ENCODE measurements at regions of chr2 and their contacts with region 1.

Region 1: DNA sequence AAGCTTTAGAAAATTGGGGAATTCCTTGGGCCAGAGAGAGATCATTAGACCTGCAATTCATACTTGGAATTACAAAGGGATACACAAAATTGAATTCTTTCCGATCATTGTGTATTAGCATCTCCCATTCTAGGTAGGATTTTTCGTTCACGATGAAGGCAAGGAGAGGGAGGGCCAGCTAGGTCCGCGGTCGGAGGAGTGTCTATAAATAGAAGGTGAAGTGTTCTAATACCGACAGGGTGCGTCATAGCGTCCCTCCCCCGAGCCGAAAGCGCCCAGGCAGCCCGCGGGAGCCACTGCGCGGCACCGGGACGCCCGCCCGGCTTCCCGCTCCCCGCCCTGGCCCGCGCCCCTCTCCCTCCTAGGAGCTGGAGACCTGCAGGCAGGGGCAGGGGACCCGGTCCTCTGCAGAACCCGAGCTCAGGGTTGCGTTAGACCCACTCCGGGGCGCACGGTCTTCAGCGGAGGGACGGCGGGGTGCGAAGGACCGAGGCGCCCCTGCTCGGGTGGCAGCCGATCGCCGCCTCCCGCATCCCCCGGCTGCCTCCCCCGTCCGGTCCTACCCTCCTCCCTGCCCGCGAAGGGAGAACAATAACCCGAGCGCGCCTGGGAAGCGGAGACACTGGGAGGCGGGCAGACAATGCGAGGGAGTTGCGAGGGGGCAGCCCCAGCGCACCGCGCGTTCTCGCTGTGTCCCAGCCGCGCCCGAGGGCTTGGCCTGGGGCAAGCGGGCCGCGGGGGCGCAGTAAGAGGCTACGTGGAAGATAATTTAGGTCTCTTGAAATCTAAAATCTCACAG is 114.2 kb upstream of the SERTAD2 start:
- DNase-seq: peak; percentile 78
- H3K4me3 ChIP-seq: peak overlapping the region; percentile 52
- CTCF ChIP-seq: no peak

Region 2: DNA sequence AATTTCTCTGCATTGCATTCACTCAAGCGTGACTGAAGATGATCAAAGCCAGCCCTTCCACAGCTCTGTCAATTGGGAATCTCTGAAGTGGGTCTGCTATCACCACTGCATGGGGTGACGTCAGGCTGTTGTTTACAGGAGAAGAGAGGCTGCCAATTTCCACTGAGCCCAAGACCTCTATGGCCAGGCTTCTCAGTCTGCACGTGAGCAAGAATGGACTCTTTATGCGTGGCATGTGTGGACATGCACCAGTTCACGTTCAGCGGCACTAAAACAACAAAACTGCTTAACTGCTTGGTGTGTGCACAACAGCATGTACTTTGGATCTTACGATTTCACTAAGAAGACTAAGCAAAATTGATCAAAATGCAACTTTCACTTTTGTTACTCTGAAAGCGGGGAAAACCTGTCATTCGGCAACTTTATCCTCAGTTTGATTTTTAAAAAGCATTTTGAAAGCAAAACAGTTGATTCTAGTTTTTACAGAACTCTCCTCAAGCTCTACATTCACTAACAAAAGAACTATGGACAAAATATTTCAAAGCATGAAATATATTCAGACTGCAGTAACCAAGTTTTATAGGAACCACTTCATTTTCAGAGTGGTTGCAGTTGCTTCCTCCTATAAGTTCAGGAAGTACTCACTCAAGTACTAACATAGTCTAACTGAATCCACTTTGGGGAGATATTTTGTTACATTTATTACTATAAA is 37.2 kb before region 1 on chr2:
- in situ Hi-C with region 1: no loop called
- DNase-seq: peak; percentile 52
- H3K4me3 ChIP-seq: peak overlapping the region; percentile 30
- CTCF ChIP-seq: no peak

Region 3: DNA sequence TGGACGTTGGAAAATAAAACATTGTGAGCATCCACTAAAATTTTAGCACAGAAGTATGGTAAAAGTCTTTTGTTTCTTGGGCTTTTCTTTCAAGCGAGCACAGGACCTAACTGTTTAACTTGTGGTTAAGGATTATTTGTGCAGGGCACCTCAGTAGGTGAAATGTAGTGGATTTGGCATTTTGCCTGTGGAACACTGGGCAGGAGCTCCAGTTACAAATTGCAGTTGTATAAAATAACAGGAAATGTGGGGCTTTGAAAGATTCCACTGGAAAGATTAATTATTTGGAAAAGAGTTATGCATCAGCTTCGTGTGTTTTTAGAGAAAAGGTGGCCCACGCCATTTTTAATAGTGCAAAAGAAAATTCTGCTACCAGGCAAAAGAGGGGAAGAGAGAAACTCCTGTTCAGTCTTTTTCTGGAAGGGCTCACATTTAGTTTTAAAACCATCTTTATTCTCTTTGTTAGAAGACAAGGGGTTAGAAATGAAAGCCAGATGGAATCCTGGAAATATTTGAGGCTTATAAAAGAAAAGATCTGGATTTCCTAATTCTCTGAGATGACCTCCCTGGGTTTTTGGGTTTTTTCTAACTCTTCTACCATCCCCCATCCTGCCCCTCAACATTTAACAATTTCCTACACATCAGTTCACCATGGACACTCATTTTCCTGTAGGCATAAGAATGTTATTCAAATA is 30.2 kb after region 1 on chr2:
- in situ Hi-C with region 1: loop called (anchors 5 kb)
- DNase-seq: peak; percentile 88
- H3K4me3 ChIP-seq: no peak overlapping the region
- CTCF ChIP-seq: no peak

Region 4: DNA sequence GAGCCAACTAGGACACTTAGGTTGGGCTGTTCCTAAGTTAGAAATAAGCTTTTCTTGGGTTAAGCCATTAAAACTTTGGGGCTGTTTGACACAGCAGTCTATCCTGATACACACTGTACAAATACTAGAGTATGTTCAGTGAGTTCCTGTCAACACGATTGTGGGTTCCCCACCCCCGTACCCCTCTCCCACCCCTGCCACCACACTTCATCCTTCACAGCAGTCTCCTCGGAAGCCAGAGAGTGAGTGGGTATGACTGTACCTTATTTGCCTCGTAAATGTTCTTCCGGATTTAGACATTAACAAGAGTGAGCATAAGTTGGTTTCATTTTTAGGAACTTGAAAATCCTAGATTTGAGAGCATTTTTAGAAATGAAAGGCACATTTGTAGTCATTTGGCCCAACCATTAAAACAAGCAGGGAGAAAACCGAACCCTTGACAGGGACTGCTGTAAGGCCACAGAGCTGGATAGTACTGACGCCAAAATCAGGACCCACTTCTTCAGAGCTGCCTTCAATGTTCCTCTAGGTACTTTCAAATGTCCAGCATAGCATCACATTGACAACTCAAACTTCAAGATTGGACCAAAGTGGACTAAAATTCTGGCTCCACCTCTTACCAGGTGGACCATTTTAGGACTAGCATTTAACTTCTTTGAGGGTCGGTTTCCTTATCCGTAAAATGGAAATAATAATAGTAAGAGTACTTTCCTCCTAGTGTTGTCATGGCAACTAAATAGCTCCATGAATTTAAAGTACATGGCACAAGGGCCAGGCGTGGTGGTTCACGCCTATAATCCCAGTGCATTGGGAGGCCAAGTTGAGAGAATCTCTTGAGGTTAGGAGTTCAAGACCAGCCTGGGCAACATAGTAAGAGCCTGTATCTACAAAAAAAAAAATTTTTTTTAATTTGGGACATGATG is 52.2 kb after region 1 on chr2:
- in situ Hi-C with region 1: no loop called
- DNase-seq: no peak
- H3K4me3 ChIP-seq: no peak overlapping the region
- CTCF ChIP-seq: no peak

Region 5: DNA sequence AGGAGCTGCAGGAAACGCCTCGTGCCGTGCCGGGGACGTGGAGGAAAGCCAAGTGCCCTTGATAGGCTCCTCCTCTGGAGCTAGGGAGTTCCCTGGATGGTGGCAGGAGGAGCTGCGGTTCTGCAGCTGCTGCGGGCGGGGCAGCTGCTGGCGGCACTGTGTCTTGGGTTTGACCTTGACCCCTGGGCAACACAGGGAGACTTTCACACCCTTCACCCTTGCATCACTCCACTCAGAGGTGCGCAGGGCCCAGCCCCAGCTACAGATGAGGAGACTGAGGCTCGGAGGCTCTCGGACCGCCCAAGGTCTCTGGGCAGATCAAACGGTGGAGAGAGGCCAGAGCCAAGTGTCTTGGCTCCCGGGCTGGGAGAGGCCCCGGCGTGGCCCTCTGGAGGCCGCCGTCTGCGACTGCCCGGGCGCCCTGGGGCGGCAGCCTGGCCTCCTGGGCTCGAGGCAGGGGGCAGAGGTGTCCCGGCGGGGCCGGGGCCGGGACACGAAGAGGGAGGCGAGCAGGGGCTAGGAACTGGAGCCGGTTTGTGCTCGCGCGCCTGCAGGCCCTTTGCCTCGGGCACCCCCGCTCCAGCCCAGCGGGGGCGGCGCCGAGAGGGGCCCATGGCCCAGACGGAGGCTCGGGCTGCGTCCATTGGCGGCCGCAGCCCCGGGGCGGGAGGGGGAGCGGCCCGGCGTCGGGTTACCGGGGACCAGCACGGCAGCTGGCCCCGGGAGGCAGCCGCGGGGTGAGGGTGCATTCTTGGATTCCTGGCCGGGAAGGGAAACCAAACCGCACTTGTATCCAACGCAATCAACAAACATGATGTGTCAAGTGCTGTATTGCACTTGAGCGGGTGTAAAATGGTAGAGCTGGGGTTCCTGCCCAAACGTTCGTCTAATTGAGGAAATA is 91.7 kb after region 1 on chr2:
- in situ Hi-C with region 1: loop called (anchors 5 kb)
- DNase-seq: peak; percentile 81
- H3K4me3 ChIP-seq: peak overlapping the region; percentile 17
- CTCF ChIP-seq: no peak